ENCODE measurements at regions of chr7 and their contacts with region 1.

Region 1: GRCh38 chr7:138814806-138815332 is 16.9 kb upstream of the ATP6V0A4 start:
- DNase-seq: no peak
- H3K4me3 Mint-ChIP-seq: no peak overlapping the region
- H3K27ac Mint-ChIP-seq: peak overlapping the region; percentile 1
- H3K4me1 Mint-ChIP-seq: peaks cover 28% of the 10 kb centered on the region
- H3K27me3 Mint-ChIP-seq: peaks cover 2% of the 10 kb centered on the region

Region 2: DNA sequence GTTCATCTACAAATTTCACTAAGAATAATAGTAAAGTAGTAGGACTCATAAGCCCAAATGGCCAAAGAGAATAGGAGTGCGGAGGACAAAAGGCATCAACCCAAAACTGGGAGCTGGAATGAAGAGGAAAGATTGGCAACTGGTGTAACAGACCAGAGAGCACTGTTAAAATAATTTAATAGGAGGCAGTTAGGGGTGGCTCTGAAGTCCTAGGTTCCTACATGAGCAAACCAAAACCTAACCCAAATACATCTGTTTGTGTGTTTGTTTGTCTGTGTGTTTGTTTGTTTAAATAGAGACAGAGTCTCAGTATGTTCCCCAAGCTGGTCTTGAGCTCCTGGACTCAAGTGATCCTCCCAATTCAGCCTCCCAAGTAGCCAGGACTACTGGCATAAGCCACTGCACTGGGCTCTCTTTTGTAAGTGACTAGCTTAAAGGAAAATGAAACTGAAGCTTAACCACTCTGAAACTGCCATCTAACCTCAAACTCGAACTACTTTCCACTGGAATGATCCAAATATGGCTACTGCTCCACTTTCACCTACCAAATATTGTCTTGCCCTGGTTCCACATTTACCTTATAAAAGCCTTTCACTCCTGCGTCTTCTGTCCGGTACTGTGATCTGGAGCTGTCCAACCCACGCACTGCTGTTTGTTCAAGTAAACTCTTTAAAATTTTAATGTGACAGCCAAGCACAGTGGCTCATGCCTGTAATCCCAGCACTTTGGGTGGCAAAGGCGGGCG is 643.7 kb before region 1 on chr7:
- intact Hi-C with region 1: loop called (anchors 5 kb)
- DNase-seq: no peak
- H3K4me3 Mint-ChIP-seq: no peak overlapping the region
- H3K27ac Mint-ChIP-seq: peak overlapping the region; percentile 14
- H3K4me1 Mint-ChIP-seq: peaks cover 27% of the 10 kb centered on the region
- H3K27me3 Mint-ChIP-seq: peaks cover 38% of the 10 kb centered on the region

Region 3: GRCh38 chr7:138752568-138753518 is 62.0 kb before region 1 on chr7:
- intact Hi-C with region 1: loop called (anchors 5 kb)
- DNase-seq: peak; percentile 86
- H3K4me3 Mint-ChIP-seq: no peak overlapping the region
- H3K27ac Mint-ChIP-seq: peak overlapping the region; percentile 50
- H3K4me1 Mint-ChIP-seq: peaks cover 35% of the 10 kb centered on the region
- H3K27me3 Mint-ChIP-seq: peaks cover 11% of the 10 kb centered on the region

Region 4: GRCh38 chr7:138825049-138825721 is 10.3 kb after region 1 on chr7:
- intact Hi-C with region 1: loop called (anchors 1 kb)
- DNase-seq: no peak
- H3K4me3 Mint-ChIP-seq: no peak overlapping the region
- H3K27ac Mint-ChIP-seq: peak overlapping the region; percentile 18
- H3K4me1 Mint-ChIP-seq: peaks cover 11% of the 10 kb centered on the region
- H3K27me3 Mint-ChIP-seq: peaks cover 11% of the 10 kb centered on the region

Region 5: DNA sequence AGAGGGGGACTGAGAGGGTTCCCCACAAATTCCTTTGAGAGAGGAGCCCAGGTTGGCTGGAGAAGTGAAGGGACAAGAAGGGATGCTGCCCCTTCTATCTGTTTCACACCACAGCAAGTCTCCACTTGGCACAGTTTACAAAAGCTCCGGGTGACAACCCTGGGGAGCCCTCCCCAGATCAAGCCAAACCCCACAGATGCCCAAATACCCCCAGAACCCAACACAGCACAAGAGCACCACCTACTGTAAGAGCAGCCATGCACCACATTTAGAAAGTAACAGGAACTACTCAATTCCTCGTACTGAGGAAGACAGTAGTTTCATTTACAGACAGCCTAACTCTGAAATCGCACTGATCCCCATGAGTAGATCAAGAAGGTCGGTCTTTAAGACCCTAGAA is 51.0 kb after region 1 on chr7:
- intact Hi-C with region 1: loop called (anchors 5 kb)
- DNase-seq: peak; percentile 46
- H3K4me3 Mint-ChIP-seq: no peak overlapping the region
- H3K27ac Mint-ChIP-seq: no peak overlapping the region
- H3K4me1 Mint-ChIP-seq: peaks cover 8% of the 10 kb centered on the region
- H3K27me3 Mint-ChIP-seq: no peaks in the 10 kb centered on the region

Region 6: DNA sequence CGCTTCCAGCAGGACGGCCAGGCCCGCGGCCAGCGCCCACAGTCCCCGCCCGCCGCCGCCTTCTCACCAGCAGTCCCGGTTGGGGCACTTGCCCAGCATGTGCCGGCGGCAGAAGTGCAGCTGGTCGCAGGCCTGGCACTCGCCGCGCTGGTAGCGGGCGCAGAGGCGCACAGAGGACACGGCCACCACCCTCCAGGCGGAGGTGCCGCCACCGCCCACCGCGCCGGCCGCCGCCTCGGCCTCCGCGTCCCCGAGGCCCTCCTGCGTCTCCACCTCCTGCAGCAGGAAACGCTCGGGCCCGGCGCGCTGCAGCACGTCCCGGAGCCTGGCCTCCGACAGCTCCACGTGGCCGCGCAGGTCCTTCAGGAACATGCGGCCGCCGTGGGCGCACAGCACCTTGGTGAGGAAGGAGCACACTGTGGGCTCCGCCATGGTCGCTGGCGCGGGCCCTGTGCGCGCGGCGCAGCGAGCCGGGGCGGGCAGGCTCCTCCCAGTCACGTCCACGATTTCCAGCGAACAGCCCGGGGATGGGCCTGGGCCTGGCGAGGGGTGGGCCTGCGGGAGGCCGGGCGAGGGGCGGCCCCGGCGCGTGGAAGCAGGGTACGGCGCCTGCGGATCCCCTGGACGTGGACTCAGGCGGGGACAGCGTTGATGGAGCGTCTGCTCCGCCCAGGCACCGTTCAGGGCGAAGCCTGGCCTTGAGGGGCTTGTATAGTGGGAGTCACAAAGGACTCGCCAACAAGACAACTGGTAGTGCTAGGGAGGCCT is 220.9 kb after region 1 on chr7 and contains the start of gene ZC3HAV1L:
- intact Hi-C with region 1: no loop called
- DNase-seq: peak; percentile 56
- H3K4me3 Mint-ChIP-seq: peak within 1 kb of the TSS; percentile 86
- H3K27ac Mint-ChIP-seq: peak within 1 kb of the TSS; percentile 89
- H3K4me1 Mint-ChIP-seq: peaks cover 33% of the 10 kb centered on the region
- H3K27me3 Mint-ChIP-seq: peaks cover 4% of the 10 kb centered on the region
- total RNA-seq, gene ZC3HAV1L: 38.2 and 39.4 TPM in 2 replicates